ENCODE measurements at regions of chr1 and their contacts with region 1.

Region 1: GRCh38 chr1:36187800-36188593 is 32.0 kb downstream of the MAP7D1 start:
- DNase-seq: peak; percentile 63 to 91 (median 80)
- ATAC-seq: peak; percentile 100
- H3K4me3 ChIP-seq: no peak overlapping the region
- H3K4me3 Mint-ChIP-seq: no peak overlapping the region
- H3K27ac ChIP-seq: peak overlapping the region in 1 of 2 experiments; percentile 31
- H3K27ac Mint-ChIP-seq: peak overlapping the region; percentile 49
- H3K4me1 ChIP-seq: peaks cover 6% of the 10 kb centered on the region
- H3K4me1 Mint-ChIP-seq: peaks cover 3% of the 10 kb centered on the region
- H3K27me3 ChIP-seq: no peaks in the 10 kb centered on the region
- H3K27me3 Mint-ChIP-seq: no peaks in the 10 kb centered on the region
- CTCF ChIP-seq: peak; percentile 74

Region 2: GRCh38 chr1:35656148-35656862 is 531.7 kb before region 1 on chr1:
- CTCF ChIA-PET with region 1: no interaction called
- POLR2A ChIA-PET with region 1: no interaction called
- intact Hi-C with region 1: no loop called
- DNase-seq: no peak
- ATAC-seq: no peak
- H3K4me3 ChIP-seq: no peak overlapping the region
- H3K4me3 Mint-ChIP-seq: no peak overlapping the region
- H3K27ac ChIP-seq: no peak overlapping the region
- H3K27ac Mint-ChIP-seq: no peak overlapping the region
- H3K4me1 ChIP-seq: no peaks in the 10 kb centered on the region
- H3K4me1 Mint-ChIP-seq: no peaks in the 10 kb centered on the region
- H3K27me3 ChIP-seq: no peaks in the 10 kb centered on the region
- H3K27me3 Mint-ChIP-seq: peaks cover 2% of the 10 kb centered on the region
- CTCF ChIP-seq: no peak

Region 3: GRCh38 chr1:35769759-35770446 is 418.1 kb before region 1 on chr1 and contains the start of gene CLSPN:
- CTCF ChIA-PET with region 1: no interaction called
- POLR2A ChIA-PET with region 1: no interaction called
- intact Hi-C with region 1: no loop called
- DNase-seq: peak; percentile 86 to 96 (median 93)
- ATAC-seq: peak; percentile 94
- H3K4me3 ChIP-seq: peak within 1 kb of the TSS; percentile 90 to 97
- H3K4me3 Mint-ChIP-seq: peak within 1 kb of the TSS; percentile 99
- H3K27ac ChIP-seq: peak within 1 kb of the TSS; percentile 61 to 81
- H3K27ac Mint-ChIP-seq: peak within 1 kb of the TSS; percentile 92
- H3K4me1 ChIP-seq: peaks cover 5% of the 10 kb centered on the region
- H3K4me1 Mint-ChIP-seq: peaks cover 8% of the 10 kb centered on the region
- H3K27me3 ChIP-seq: no peaks in the 10 kb centered on the region
- H3K27me3 Mint-ChIP-seq: no peaks in the 10 kb centered on the region
- CTCF ChIP-seq: no peak
- total RNA-seq, gene CLSPN: 0.41 to 0.81 TPM

Region 4: GRCh38 chr1:36134505-36135329 is 53.3 kb before region 1 on chr1:
- CTCF ChIA-PET with region 1: interaction called, 24 read pairs
- POLR2A ChIA-PET with region 1: no interaction called
- intact Hi-C with region 1: loop called in 1 of 2 experiments (anchors 10 kb)
- DNase-seq: peak in 7 of 9 experiments; percentile 34 to 75 (median 52)
- ATAC-seq: peak; percentile 61
- H3K4me3 ChIP-seq: no peak overlapping the region
- H3K4me3 Mint-ChIP-seq: no peak overlapping the region
- H3K27ac ChIP-seq: no peak overlapping the region
- H3K27ac Mint-ChIP-seq: peak overlapping the region; percentile 56
- H3K4me1 ChIP-seq: no peaks in the 10 kb centered on the region
- H3K4me1 Mint-ChIP-seq: no peaks in the 10 kb centered on the region
- H3K27me3 ChIP-seq: no peaks in the 10 kb centered on the region
- H3K27me3 Mint-ChIP-seq: no peaks in the 10 kb centered on the region
- CTCF ChIP-seq: peak; percentile 56

Region 5: GRCh38 chr1:36155408-36156328 is 32.3 kb before region 1 on chr1 and contains the start of gene MAP7D1:
- CTCF ChIA-PET with region 1: interaction called, 245 read pairs
- POLR2A ChIA-PET with region 1: interaction called, 42 read pairs
- intact Hi-C with region 1: no loop called
- DNase-seq: peak; percentile 69 to 94 (median 88)
- ATAC-seq: peak; percentile 74
- H3K4me3 ChIP-seq: peak within 1 kb of the TSS; percentile 92 to 97
- H3K4me3 Mint-ChIP-seq: peak within 1 kb of the TSS; percentile 89
- H3K27ac ChIP-seq: peak within 1 kb of the TSS; percentile 92 to 97
- H3K27ac Mint-ChIP-seq: peak within 1 kb of the TSS; percentile 94
- H3K4me1 ChIP-seq: peaks cover 75% of the 10 kb centered on the region
- H3K4me1 Mint-ChIP-seq: peaks cover 71% of the 10 kb centered on the region
- H3K27me3 ChIP-seq: no peaks in the 10 kb centered on the region
- H3K27me3 Mint-ChIP-seq: no peaks in the 10 kb centered on the region
- CTCF ChIP-seq: no peak
- total RNA-seq, gene MAP7D1: 113 to 117 TPM

Region 6: GRCh38 chr1:36166938-36167910 is 20.8 kb before region 1 on chr1:
- CTCF ChIA-PET with region 1: interaction called, 82 read pairs
- POLR2A ChIA-PET with region 1: interaction called, 5 read pairs
- intact Hi-C with region 1: loop called in 1 of 2 experiments (anchors 1 kb)
- DNase-seq: no peak
- ATAC-seq: no peak
- H3K4me3 ChIP-seq: no peak overlapping the region
- H3K4me3 Mint-ChIP-seq: no peak overlapping the region
- H3K27ac ChIP-seq: no peak overlapping the region
- H3K27ac Mint-ChIP-seq: peak overlapping the region; percentile 89
- H3K4me1 ChIP-seq: peaks cover 25% of the 10 kb centered on the region
- H3K4me1 Mint-ChIP-seq: peaks cover 57% of the 10 kb centered on the region
- H3K27me3 ChIP-seq: no peaks in the 10 kb centered on the region
- H3K27me3 Mint-ChIP-seq: no peaks in the 10 kb centered on the region
- CTCF ChIP-seq: no peak

Region 7: DNA sequence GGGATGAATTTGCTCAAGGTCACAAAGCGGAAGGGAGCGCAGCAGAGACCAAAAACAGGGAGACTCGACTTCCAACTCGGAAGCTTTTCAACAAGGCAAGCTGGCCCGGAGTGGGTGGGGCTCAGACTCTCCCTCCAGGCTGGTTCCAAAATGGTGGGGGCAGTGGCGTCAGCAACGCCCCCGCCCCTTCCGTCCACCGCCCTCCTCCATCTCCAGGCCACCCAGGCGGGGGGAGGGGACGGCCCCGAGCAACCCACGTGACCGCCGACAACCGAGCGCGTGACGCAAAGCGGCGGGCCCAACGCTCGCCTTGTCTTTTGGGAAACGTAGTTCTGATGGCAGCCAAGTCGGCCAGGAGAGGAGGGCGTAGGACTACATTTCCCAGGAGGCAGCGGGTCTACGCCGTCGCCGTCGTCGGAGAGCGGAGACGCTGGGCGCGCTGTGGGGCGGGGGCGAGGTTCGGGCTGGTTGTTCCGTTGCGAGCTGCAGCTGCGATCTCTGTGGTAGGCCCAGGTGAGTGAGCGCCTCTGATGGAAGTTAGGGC is 36.1 kb after region 1 on chr1 and contains the start of gene THRAP3:
- CTCF ChIA-PET with region 1: interaction called, 6 read pairs
- POLR2A ChIA-PET with region 1: interaction called, 12 read pairs
- intact Hi-C with region 1: loop called (anchors 1 kb)
- DNase-seq: peak; percentile 99 to 100 (median 100)
- ATAC-seq: peak; percentile 86
- H3K4me3 ChIP-seq: peak within 1 kb of the TSS; percentile 86 to 87
- H3K4me3 Mint-ChIP-seq: peak within 1 kb of the TSS; percentile 97
- H3K27ac ChIP-seq: peak within 1 kb of the TSS; percentile 97 to 100
- H3K27ac Mint-ChIP-seq: peak within 1 kb of the TSS; percentile 100
- H3K4me1 ChIP-seq: peaks cover 34% of the 10 kb centered on the region
- H3K4me1 Mint-ChIP-seq: peaks cover 34% of the 10 kb centered on the region
- H3K27me3 ChIP-seq: no peaks in the 10 kb centered on the region
- H3K27me3 Mint-ChIP-seq: no peaks in the 10 kb centered on the region
- CTCF ChIP-seq: no peak
- total RNA-seq, gene THRAP3: 83.2 to 88.4 TPM

Region 8: GRCh38 chr1:37362594-37363385 is 1174.8 kb after region 1 on chr1:
- CTCF ChIA-PET with region 1: no interaction called
- POLR2A ChIA-PET with region 1: no interaction called
- intact Hi-C with region 1: no loop called
- DNase-seq: no peak
- ATAC-seq: no peak
- H3K4me3 ChIP-seq: no peak overlapping the region
- H3K4me3 Mint-ChIP-seq: no peak overlapping the region
- H3K27ac ChIP-seq: no peak overlapping the region
- H3K27ac Mint-ChIP-seq: no peak overlapping the region
- H3K4me1 ChIP-seq: no peaks in the 10 kb centered on the region
- H3K4me1 Mint-ChIP-seq: no peaks in the 10 kb centered on the region
- H3K27me3 ChIP-seq: no peaks in the 10 kb centered on the region
- H3K27me3 Mint-ChIP-seq: peaks cover 48% of the 10 kb centered on the region
- CTCF ChIP-seq: no peak